ENCODE measurements at regions of chrX and their contacts with region 1.

Region 1: DNA sequence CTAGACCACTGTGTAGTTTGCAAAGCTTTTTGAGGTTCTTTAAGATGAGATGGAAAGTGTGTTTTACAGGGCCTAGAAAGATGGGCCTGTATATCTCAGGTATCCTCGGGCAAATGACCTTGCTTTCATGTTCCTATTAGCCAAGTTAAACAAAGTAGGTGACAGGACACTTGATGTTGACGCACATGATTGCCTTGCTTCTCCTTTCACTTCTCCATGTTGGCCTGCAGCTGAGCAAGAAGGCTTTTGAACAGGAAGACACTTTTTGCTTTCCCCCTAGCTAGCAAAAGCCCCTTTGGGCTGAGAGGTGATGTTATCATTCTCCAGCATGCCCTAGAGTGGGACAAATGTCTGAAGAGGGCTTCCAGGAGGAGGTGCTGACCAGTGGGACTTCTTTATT is 202.1 kb downstream of the GPC3 start:
- DNase-seq: no peak
- H3K4me3 ChIP-seq: no peak overlapping the region
- H3K27ac ChIP-seq: no peak overlapping the region
- H3K4me1 ChIP-seq: peaks cover 0 to 6% (median 1%) of the 10 kb centered on the region in 4 experiments; a peak in 2 of 7 replicates
- H3K27me3 ChIP-seq: no peaks in the 10 kb centered on the region
- CTCF ChIP-seq: no peak
- EP300 ChIP-seq: no peak
- POLR2A ChIP-seq: no peak
- RAD21 ChIP-seq: no peak

Region 2: DNA sequence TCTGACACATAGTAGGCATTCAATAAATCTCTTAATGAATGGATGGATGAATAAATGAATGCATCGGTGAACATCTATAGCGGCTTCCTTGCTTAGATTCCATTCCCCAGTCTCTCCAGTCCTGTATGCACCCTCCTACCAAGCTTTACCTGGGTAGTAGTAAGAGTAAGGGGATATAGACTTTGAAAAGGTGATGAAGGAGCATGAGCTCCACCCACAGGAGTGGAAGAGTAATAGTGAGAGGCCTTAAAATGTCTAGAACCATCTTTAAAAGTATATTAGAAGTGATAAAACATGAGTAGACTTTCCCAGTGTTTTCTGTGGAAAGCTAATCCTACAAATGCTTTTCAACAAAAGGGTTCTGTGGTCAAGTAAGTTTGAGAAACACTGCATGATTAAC is 237.6 kb after region 1 on chrX:
- CTCF ChIA-PET with region 1: interaction called, 11 read pairs
- POLR2A ChIA-PET with region 1: no interaction called
- DNase-seq: no peak
- H3K4me3 ChIP-seq: no peak overlapping the region
- H3K27ac ChIP-seq: no peak overlapping the region
- H3K4me1 ChIP-seq: no peaks in the 10 kb centered on the region; a peak in 1 of 7 replicates
- H3K27me3 ChIP-seq: no peaks in the 10 kb centered on the region
- CTCF ChIP-seq: peak in 2 of 3 experiments; percentile 35 to 41; a peak in 2 of 4 replicates
- EP300 ChIP-seq: no peak
- POLR2A ChIP-seq: no peak
- RAD21 ChIP-seq: peak; percentile 74 to 75

Measured in H1 (cell line).